Caco-2 (cell line): ENCODE measurements at regions of chr1 and their contacts with region 1.

Region 1: DNA sequence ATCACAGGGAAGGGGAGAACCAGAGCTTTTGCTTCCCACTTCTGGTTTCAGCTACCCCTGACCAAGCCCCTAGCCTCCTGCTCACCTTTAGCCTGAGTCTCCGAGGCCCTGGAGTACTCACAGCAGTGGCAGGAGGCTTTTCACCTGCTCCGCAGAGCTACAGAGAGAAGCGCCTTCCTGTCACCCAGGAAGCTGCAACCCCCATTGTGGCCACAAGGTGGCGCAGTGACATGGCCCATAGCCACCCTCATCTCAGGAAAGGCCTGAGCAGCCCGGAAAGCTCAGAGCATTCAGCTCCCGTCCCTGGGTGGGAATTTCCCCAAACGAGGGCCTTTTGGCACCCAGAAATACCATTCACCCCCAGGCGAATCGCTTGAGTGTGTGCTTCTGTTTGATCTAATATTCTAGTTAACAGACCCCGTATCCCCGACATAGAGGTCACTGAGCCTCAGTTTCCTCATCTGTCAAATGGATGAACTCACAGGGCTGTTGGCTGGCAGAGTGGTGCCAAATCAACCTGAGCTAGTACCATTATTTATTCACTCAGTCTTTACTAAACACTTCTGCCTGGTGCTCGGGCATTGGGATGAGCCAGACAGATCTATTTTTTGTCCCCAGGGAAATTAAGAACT is 25.3 kb downstream of the A3GALT2 start:
- DNase-seq: peak; percentile 72 to 84
- H3K4me3 ChIP-seq: no peak overlapping the region
- H3K4me3 Mint-ChIP-seq: no peak overlapping the region
- H3K27ac Mint-ChIP-seq: no peak overlapping the region
- H3K4me1 ChIP-seq: no peaks in the 10 kb centered on the region
- H3K4me1 Mint-ChIP-seq: no peaks in the 10 kb centered on the region
- H3K27me3 ChIP-seq: no peaks in the 10 kb centered on the region
- H3K27me3 Mint-ChIP-seq: no peaks in the 10 kb centered on the region
- CTCF ChIP-seq: peak; percentile 78 to 80

Region 2: GRCh38 chr1:33338440-33339211 is 43.1 kb after region 1 on chr1:
- CTCF ChIA-PET with region 1: interaction called, 9 read pairs
- POLR2A ChIA-PET with region 1: no interaction called
- intact Hi-C with region 1: loop called (anchors 5 kb)
- DNase-seq: peak; percentile 15 to 64
- H3K4me3 ChIP-seq: no peak overlapping the region
- H3K4me3 Mint-ChIP-seq: peak overlapping the region; percentile 38
- H3K27ac Mint-ChIP-seq: peak overlapping the region; percentile 71
- H3K4me1 ChIP-seq: peaks cover 49% of the 10 kb centered on the region
- H3K4me1 Mint-ChIP-seq: peaks cover 20% of the 10 kb centered on the region
- H3K27me3 ChIP-seq: no peaks in the 10 kb centered on the region
- H3K27me3 Mint-ChIP-seq: no peaks in the 10 kb centered on the region
- CTCF ChIP-seq: no peak

Region 3: DNA sequence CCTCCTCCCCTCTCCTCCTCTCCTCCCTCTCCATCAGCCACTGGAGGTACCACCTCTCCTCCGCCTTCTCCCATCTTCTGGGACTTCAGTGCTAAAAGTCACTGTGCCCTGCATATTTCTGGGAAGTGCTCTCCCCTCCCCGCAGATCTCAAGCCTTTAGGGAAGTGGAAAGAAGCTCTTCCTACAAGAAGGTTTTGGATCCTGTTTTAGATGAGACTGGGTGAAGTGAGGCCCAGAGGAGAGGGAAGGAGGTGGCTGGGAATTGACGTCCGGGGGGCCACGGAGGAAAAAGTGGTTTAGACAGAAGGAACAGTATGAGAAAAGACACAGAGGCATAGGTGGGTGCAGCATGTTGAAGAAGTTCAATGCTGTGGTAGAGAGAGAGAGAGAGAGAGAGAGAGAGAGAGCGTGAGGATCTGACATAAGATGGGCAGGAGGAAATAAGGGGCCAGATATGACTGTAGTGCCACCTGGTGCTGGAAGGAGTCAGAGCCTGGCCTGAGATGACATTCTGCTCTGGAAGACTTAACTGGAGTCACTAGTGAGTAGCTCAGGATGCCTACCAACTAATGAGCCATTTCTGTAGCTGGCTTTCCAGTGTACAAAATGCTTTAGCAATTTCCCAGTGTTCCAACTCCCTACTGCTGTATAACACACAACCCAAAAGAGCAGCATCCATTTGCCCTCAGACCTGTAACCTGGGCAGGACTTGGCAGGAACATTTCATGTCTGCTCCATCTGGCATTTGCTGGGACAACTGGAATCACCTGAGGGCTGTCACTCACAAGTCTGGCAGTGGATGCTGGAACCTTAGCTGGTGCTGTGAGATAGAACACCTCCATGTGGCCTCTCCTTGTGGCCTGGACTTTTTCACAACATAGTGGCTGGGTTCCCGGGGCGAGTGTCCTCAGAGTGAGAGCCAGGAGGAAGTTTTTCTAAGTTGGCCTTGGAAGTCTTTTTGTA is 160.3 kb after region 1 on chr1:
- CTCF ChIA-PET with region 1: interaction called, 6 read pairs
- POLR2A ChIA-PET with region 1: no interaction called
- intact Hi-C with region 1: loop called (anchors 5 kb)
- DNase-seq: peak; percentile 45 to 54
- H3K4me3 ChIP-seq: no peak overlapping the region
- H3K4me3 Mint-ChIP-seq: no peak overlapping the region
- H3K27ac Mint-ChIP-seq: no peak overlapping the region
- H3K4me1 ChIP-seq: no peaks in the 10 kb centered on the region
- H3K4me1 Mint-ChIP-seq: peaks cover 6% of the 10 kb centered on the region
- H3K27me3 ChIP-seq: no peaks in the 10 kb centered on the region
- H3K27me3 Mint-ChIP-seq: peaks cover 3% of the 10 kb centered on the region
- CTCF ChIP-seq: peak in 1 of 2 experiments; percentile 58